ENCODE measurements at regions of chr5 and their contacts with region 1.

Region 1: DNA sequence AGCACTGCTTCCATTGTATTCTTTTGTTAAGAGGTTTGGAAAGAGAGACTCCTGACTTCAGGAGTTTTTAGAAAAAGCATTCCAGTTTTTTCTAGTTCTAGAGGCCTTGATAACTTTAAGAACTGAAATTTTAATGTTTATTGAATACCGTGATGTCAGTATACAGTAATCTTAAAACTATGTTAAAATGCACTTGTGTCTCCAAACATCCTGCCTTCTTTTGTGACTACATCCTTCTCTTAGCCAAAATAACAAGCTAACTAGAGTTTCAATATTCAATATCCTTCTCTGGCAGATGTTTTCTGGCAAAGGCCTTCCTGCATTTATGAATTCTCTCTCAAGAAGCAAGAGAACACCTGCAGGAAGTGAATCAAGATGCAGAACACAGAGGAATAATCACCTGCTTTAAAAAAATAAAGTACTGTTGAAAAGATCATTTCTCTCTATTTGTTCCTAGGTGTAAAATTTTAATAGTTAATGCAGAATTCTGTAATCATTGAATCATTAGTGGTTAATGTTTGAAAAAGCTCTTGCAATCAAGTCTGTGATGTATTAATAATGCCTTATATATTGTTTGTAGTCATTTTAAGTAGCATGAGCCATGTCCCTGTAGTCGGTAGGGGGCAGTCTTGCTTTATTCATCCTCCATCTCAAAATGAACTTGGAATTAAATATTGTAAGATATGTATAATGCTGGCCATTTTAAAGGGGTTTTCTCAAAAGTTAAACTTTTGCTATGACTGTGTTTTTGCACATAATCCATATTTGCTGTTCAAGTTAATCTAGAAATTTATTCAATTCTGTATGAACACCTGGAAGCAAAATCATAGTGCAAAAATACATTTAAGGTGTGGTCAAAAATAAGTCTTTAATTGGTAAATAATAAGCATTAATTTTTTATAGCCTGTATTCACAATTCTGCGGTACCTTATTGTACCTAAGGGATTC is 43.1 kb downstream of the NDFIP1 start:
- DNase-seq: peak; percentile 35 to 59 (median 50)
- H3K4me3 ChIP-seq: no peak overlapping the region
- H3K4me3 Mint-ChIP-seq: no peak overlapping the region
- H3K27ac ChIP-seq: no peak overlapping the region
- H3K27ac Mint-ChIP-seq: peak overlapping the region in 2 of 8 donors; percentile 32 to 50
- H3K4me1 ChIP-seq: no peaks in the 10 kb centered on the region
- H3K4me1 Mint-ChIP-seq: peaks cover 2 to 10% (median 9%) of the 10 kb centered on the region in 3 donors
- H3K27me3 ChIP-seq: no peaks in the 10 kb centered on the region
- H3K27me3 Mint-ChIP-seq: no peaks in the 10 kb centered on the region

Region 2: DNA sequence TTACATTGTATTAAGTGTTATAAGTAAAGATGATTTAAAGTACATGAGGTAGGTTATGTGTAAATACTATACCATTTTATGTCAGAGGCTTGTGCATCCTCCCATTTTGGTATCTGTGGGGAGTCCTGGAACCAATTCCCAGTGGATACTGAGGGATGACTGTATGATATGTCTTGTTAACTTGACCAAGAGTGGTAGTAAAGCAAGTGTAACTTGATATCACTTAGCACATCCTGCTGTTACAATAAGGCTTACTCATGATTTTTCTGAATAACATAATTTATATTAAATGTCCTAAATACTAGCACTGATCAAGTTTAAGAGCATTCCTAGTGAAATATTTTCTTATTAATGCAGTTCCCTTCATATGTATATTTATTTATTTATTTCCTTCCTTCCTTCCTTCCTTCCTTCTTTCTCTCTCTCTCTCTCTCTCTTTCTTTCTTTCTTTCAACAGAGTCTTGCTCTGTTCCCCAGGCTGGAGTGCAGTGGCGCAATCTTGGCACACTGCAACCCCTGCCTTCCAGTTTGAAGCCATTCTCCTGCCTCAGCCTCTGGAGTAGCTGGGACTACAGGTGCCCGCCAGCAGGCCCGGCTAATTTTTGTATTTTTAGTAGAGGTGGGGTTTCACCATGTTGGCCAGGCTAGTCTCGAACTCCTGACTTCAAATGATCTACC is 35.6 kb before region 1 on chr5:
- CTCF ChIA-PET with region 1: no interaction called
- POLR2A ChIA-PET with region 1: no interaction called
- DNase-seq: no peak
- H3K4me3 ChIP-seq: no peak overlapping the region
- H3K4me3 Mint-ChIP-seq: peak overlapping the region in 1 of 7 donors; percentile 40
- H3K27ac ChIP-seq: no peak overlapping the region
- H3K27ac Mint-ChIP-seq: peak overlapping the region in 2 of 8 donors; percentile 45 to 57
- H3K4me1 ChIP-seq: peaks cover 66% of the 10 kb centered on the region
- H3K4me1 Mint-ChIP-seq: peaks cover 72 to 82% (median 80%) of the 10 kb centered on the region in 3 donors
- H3K27me3 ChIP-seq: no peaks in the 10 kb centered on the region
- H3K27me3 Mint-ChIP-seq: no peaks in the 10 kb centered on the region

Region 3: GRCh38 chr5:142548739-142549275 is 397.1 kb after region 1 on chr5:
- CTCF ChIA-PET with region 1: interaction called, 13 read pairs
- POLR2A ChIA-PET with region 1: interaction called, 3 read pairs
- DNase-seq: peak in 2 of 5 donors; percentile 7 to 17
- H3K4me3 ChIP-seq: no peak overlapping the region
- H3K4me3 Mint-ChIP-seq: no peak overlapping the region
- H3K27ac ChIP-seq: no peak overlapping the region
- H3K27ac Mint-ChIP-seq: peak overlapping the region in 2 of 8 donors; percentile 27 to 75
- H3K4me1 ChIP-seq: peaks cover 5% of the 10 kb centered on the region
- H3K4me1 Mint-ChIP-seq: peaks cover 7 to 9% (median 7%) of the 10 kb centered on the region in 3 donors
- H3K27me3 ChIP-seq: peaks cover 5% of the 10 kb centered on the region
- H3K27me3 Mint-ChIP-seq: peaks cover 19 to 39% of the 10 kb centered on the region in 2 donors